ENCODE measurements at regions of chr10 and their contacts with region 1.

Region 1: DNA sequence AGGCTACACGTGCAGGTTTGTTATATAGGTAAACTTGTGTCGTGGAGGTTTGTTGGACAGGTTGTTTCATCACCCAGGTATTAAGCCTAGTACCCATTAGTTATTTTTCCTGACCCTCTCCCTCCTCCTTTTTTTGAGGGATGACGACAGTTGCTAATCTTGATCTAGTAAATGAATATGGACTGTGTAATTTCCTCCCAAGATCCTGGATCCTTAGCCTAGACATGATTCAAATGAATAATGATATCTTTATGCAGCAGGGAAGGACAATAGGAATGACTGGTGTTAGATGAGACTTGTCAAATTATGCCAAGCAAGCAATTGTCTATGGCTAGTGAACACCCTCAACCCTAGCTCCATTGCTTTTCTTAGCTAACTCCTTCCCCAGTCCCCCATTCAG is 156.2 kb downstream of the PLPP4 start:
- DNase-seq: peak; percentile 84
- H3K4me3 ChIP-seq: no peak overlapping the region
- H3K27ac ChIP-seq: peak overlapping the region; percentile 92
- H3K4me1 ChIP-seq: peaks cover 40% of the 10 kb centered on the region
- H3K27me3 ChIP-seq: no peaks in the 10 kb centered on the region
- CTCF ChIP-seq: no peak
- POLR2A ChIP-seq: no peak

Region 2: DNA sequence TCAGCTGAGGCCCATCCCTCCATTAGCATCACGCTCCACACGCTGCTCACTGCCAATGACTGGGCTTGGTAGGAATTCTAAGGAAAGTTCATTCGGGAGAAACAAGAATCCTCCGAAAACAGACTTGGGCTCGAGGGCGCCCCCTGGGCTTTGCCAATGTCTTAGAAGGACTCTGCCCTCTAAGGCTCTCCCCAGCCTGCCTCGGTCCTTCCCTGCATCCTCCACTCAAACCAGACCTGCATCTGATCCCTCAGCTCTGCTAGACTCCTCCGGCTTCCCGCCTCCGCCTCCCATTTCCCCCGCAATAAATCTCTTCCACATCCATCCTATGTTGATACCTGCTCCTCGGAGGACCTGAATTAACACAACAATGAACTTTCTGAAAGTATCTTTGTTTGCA is 21.4 kb after region 1 on chr10:
- CTCF ChIA-PET with region 1: interaction called, 5 read pairs
- POLR2A ChIA-PET with region 1: no interaction called
- dilution Hi-C with region 1: no loop called
- intact Hi-C with region 1: loop called (anchors 1 kb)
- DNase-seq: no peak
- H3K4me3 ChIP-seq: no peak overlapping the region
- H3K27ac ChIP-seq: no peak overlapping the region
- H3K4me1 ChIP-seq: peaks cover 50% of the 10 kb centered on the region
- H3K27me3 ChIP-seq: no peaks in the 10 kb centered on the region
- CTCF ChIP-seq: no peak
- POLR2A ChIP-seq: no peak

Region 3: GRCh38 chr10:120684226-120684625 is 71.0 kb after region 1 on chr10:
- CTCF ChIA-PET with region 1: no interaction called
- POLR2A ChIA-PET with region 1: no interaction called
- dilution Hi-C with region 1: no loop called
- intact Hi-C with region 1: loop called (anchors 5 kb)
- DNase-seq: peak; percentile 77
- H3K4me3 ChIP-seq: no peak overlapping the region
- H3K27ac ChIP-seq: peak overlapping the region; percentile 42
- H3K4me1 ChIP-seq: peaks cover 17% of the 10 kb centered on the region
- H3K27me3 ChIP-seq: no peaks in the 10 kb centered on the region
- CTCF ChIP-seq: no peak
- POLR2A ChIP-seq: no peak